ENCODE measurements at regions of chr9 and their contacts with region 1.

Region 1: GRCh38 chr9:36166101-36166927 is 2.9 kb upstream of the CCIN start:
- DNase-seq: peak; percentile 81
- ATAC-seq: peak; percentile 91
- H3K4me3 ChIP-seq: peak overlapping the region; percentile 55
- H3K27ac ChIP-seq: peak overlapping the region; percentile 35
- H3K4me1 ChIP-seq: peaks cover 29% of the 10 kb centered on the region
- H3K27me3 ChIP-seq: no peaks in the 10 kb centered on the region; the same call in 1 of the 2 replicates
- CTCF ChIP-seq: peak; percentile 92
- POLR2A ChIP-seq: 0 out of 2 replicates have a peak, but pooled peaks have one; percentile 28
- RAD21 ChIP-seq: peak; percentile 93

Region 2: DNA sequence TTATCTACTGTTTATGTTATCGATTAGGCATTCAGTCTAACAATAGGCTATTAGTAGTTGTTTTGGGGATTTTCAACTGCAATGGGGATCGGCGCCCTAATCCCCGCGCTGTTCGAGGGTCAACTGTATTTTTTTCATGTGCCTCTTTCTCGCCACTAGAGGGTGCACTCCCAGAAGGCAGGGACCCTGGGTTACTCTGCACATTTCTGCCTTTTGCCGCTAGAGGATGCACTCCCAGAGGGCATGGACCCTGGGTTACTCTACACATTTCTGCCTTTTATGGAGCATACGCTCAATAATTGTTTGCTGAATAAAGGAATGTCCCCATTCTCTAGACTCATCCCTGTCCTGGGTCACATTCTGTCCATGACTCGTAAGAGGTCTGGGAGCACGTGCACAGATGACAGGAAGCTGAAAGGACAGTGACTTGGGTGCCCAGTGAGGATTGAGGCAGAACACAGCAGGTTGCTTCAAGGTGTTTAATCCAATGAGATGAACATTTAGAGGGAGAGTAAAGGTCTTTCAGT is 157.5 kb before region 1 on chr9:
- CTCF ChIA-PET with region 1: interaction called, 3 read pairs
- POLR2A ChIA-PET with region 1: no interaction called
- dilution Hi-C with region 1: no loop called
- in situ Hi-C with region 1: no loop called
- intact Hi-C with region 1: loop called (anchors 2 kb)
- DNase-seq: peak; percentile 38
- ATAC-seq: peak; percentile 86
- H3K4me3 ChIP-seq: no peak overlapping the region
- H3K27ac ChIP-seq: no peak overlapping the region; the same call in 1 of the 2 replicates
- H3K4me1 ChIP-seq: peaks cover 2% of the 10 kb centered on the region; the same call in 1 of the 2 replicates
- H3K27me3 ChIP-seq: no peaks in the 10 kb centered on the region; the same call in 1 of the 2 replicates
- CTCF ChIP-seq: peak; percentile 83
- POLR2A ChIP-seq: no peak
- RAD21 ChIP-seq: peak; percentile 79

Region 3: GRCh38 chr9:36136272-36136893 is 29.9 kb before region 1 on chr9 and contains the start of gene GLIPR2:
- CTCF ChIA-PET with region 1: no interaction called
- POLR2A ChIA-PET with region 1: interaction called, 4 read pairs
- dilution Hi-C with region 1: no loop called
- in situ Hi-C with region 1: no loop called
- intact Hi-C with region 1: loop called (anchors 2 kb)
- DNase-seq: peak; percentile 65
- ATAC-seq: peak; percentile 97
- H3K4me3 ChIP-seq: peak within 1 kb of the TSS; percentile 78
- H3K27ac ChIP-seq: peak within 1 kb of the TSS; percentile 65
- H3K4me1 ChIP-seq: peaks cover 17% of the 10 kb centered on the region
- H3K27me3 ChIP-seq: no peaks in the 10 kb centered on the region
- CTCF ChIP-seq: peak; percentile 37
- POLR2A ChIP-seq: peak; percentile 44; the same call in 1 of the 2 replicates
- RAD21 ChIP-seq: peak; percentile 26; the same call in 1 of the 2 replicates
- total RNA-seq, gene GLIPR2: 35.8 and 37.8 TPM in 2 replicates